GM10248 (cell line): ENCODE measurements at regions of chr1 and their contacts with region 1.

Region 1: DNA sequence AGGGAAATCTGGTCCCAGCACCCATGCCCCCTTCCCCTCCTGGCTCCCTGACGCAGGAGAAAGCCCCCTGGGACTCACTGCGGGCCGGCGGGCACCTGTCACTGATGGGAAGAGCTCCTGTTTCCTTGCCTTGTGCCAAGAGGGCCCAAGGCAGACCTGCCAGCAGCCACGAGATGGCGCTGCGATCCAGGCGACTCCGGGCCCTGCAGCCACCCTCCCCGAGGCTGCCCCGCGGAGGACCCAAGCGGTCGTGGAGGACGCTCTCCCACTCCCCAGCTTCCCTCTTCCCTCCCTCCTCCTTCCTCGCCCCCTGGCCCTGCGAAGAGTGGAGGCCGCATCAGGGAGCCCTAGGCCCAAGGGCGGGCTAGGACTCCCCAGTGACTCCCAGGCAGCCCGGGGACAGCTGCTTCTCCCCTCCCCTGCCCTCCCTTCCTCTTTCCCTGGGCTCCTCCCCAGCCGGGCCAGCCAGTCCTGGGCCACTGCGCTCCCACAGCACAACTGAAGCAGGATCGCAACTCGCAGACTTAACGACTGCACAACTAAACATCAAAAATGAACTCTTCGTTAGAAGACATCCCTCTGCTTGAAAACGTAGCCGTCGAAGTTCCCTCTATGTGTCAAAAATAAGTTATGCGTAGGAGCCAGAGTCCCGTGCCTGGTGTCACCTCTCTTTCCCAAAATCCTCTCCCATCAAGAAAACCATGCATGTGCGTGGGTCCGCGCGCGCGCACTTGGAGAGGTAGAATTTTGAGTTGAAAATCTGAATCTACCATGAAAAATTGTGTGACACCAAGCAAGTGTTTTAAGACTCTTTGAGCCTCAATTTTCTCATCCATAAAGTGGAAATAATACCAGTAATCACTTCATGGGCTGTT is 34.2 kb downstream of the BATF3 start:
- DNase-seq: peak; percentile 88
- CTCF ChIP-seq: peak; percentile 99

Region 2: GRCh38 chr1:212558693-212559480 is 106.6 kb before region 1 on chr1:
- CTCF ChIA-PET with region 1: interaction called, 10 read pairs
- POLR2A ChIA-PET with region 1: no interaction called
- DNase-seq: peak; percentile 96
- CTCF ChIP-seq: no peak

Region 3: GRCh38 chr1:212638492-212639151 is 26.9 kb before region 1 on chr1:
- CTCF ChIA-PET with region 1: interaction called, 32 read pairs
- POLR2A ChIA-PET with region 1: no interaction called
- DNase-seq: no peak
- CTCF ChIP-seq: no peak

Region 4: GRCh38 chr1:212699104-212699624 is 33.7 kb after region 1 on chr1:
- CTCF ChIA-PET with region 1: interaction called, 23 read pairs
- POLR2A ChIA-PET with region 1: no interaction called
- DNase-seq: peak; percentile 79
- CTCF ChIP-seq: peak; percentile 69

Region 5: DNA sequence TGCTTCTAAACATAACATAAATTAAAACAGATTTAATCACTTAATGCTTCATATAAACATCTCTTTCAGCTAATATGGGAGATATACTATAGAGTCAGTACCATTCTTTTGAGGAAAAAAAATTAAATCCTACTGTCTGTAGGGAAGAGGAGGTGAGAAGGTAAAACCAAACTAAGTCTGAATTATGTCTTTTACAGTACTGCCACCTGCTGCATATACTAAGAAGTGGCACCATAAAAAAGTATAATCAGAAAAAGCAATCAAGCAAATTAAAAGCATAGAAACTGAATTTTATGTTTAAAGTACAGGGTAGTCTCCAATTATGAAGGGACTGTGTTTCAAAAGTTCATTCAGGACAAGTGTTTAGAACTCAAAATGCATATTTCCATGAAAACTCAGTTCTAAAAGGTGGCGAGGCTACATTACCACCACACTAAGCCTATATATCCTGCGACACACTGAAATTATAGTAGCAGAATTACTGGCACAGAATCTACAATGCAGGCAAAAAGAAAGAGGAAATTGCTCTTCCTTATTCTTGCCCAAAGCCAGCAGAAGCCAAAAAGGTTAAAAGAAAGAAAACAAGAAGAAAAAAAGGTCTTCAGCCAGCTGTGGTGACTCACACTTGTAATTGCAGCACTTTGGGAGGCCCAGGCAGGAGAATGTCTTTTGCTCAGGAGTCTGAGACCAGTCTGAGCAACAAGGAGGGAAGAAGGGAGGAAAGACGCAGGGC is 117.1 kb after region 1 on chr1:
- CTCF ChIA-PET with region 1: interaction called, 43 read pairs
- POLR2A ChIA-PET with region 1: no interaction called
- DNase-seq: no peak
- CTCF ChIP-seq: peak; percentile 54

Region 6: GRCh38 chr1:212847549-212847948 is 182.1 kb after region 1 on chr1 and contains the start of gene SPATA45:
- CTCF ChIA-PET with region 1: no interaction called
- POLR2A ChIA-PET with region 1: no interaction called
- DNase-seq: no peak
- CTCF ChIP-seq: no peak

Region 7: DNA sequence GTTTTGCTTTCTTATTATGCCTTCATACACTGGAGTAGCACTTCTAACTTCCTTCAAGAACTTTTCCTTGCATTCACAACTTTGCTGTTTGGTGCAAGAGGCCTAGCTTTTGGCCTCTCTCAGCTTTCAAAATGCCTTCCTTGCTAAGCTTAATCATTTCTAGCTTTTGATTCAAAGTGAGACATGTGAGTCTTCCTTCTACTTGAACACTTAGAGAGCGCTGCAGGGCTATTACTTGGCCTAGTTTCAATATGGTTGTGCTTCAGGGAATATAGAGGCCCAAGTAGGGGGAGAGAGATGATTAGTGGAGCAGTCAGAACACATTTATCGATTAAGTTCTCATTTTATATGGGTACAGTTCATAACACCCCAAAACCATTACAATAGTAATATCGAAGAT is 337.8 kb after region 1 on chr1:
- CTCF ChIA-PET with region 1: interaction called, 12 read pairs
- POLR2A ChIA-PET with region 1: no interaction called
- DNase-seq: no peak
- CTCF ChIP-seq: no peak

Region 8: DNA sequence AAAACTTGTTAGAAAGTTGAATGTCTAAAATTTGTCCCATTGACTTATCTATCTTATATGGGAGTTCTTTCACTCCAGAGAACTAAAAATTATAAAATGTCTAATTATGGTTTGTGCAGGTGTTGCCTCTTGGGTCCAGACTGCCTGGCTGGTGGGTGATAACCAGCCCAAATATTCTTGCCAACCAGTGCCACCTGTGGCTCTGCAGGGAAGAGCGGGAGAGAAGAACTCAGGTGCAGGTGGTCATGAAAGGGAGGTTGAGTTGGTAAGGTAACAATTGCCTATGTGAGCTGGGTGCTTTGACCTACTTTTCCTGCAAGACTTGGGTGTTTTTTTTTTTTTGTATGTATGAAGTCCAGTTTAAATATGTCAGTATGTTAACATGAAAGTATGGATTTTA is 395.8 kb after region 1 on chr1:
- CTCF ChIA-PET with region 1: no interaction called
- POLR2A ChIA-PET with region 1: no interaction called
- DNase-seq: no peak
- CTCF ChIP-seq: no peak